ENCODE measurements at regions of chrX and their contacts with region 1.

Region 1: GRCh38 chrX:10900585-10901289 is 210.4 kb upstream of the HCCS start:
- DNase-seq: no peak
- H3K4me3 ChIP-seq: no peak overlapping the region
- H3K27ac ChIP-seq: peak overlapping the region; percentile 14 to 54
- H3K4me1 ChIP-seq: peaks cover 0 to 2% of the 10 kb centered on the region in 2 donors
- H3K27me3 ChIP-seq: no peaks in the 10 kb centered on the region
- CTCF ChIP-seq: no peak

Region 2: DNA sequence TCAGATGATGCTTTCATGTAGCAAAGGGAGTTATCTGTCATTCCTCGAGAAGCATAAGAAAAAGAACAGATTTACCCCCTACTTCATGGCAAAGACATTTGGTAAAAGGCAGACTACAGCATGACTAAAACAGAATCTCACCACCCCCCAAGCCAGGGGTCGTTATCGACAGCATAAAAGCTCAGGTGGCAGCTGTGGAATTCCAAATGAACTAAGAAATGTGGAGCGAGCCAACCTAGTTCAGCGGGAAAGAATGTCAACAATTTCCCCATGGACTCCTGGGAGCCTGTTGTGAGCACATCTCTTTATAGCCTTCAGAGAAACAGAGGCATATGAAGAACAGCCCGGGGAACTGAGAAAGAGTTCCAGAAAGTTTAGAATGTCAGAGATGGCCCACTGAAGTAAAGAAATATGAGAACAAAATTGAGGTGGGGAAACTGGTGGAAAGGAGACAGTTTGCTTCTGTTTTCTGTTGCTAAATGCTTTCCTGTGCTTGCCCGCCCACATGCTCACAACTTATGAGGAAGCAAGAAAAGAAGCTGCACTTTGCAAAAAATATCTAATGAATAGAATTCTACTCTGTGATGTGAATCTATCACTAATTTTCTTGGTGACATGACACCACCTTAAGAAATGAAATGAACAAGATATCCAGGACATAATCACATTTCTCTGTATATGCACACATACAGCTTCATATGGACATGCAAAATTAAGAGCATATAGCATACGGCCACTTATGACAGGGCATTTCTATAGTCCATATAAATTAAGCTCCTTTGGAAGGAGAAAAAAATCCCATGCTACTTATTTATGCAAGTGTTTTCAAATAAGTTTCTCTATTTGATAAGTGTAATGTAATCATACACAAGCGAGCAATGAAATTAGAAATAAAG is 145.1 kb before region 1 on chrX:
- intact Hi-C with region 1: loop called (anchors 10 kb)
- DNase-seq: no peak
- H3K4me3 ChIP-seq: peak overlapping the region in 1 of 2 donors; percentile 30
- H3K27ac ChIP-seq: peak overlapping the region; percentile 2 to 55
- H3K4me1 ChIP-seq: peaks cover 0 to 5% of the 10 kb centered on the region in 2 donors
- H3K27me3 ChIP-seq: no peaks in the 10 kb centered on the region
- CTCF ChIP-seq: no peak

Region 3: GRCh38 chrX:10939384-10939897 is 38.7 kb after region 1 on chrX:
- intact Hi-C with region 1: no loop called
- DNase-seq: no peak
- H3K4me3 ChIP-seq: no peak overlapping the region
- H3K27ac ChIP-seq: no peak overlapping the region
- H3K4me1 ChIP-seq: no peaks in the 10 kb centered on the region
- H3K27me3 ChIP-seq: no peaks in the 10 kb centered on the region
- CTCF ChIP-seq: no peak